Panc1 (cell line): ENCODE measurements at regions of chr2 and their contacts with region 1.

Region 1: GRCh38 chr2:149849136-149849535 is 261.6 kb upstream of the MMADHC start:
- DNase-seq: no peak
- ATAC-seq: no peak
- H3K4me3 ChIP-seq: no peak overlapping the region
- H3K27ac ChIP-seq: no peak overlapping the region
- H3K4me1 ChIP-seq: no peaks in the 10 kb centered on the region
- H3K27me3 ChIP-seq: no peaks in the 10 kb centered on the region
- CTCF ChIP-seq: no peak

Region 2: DNA sequence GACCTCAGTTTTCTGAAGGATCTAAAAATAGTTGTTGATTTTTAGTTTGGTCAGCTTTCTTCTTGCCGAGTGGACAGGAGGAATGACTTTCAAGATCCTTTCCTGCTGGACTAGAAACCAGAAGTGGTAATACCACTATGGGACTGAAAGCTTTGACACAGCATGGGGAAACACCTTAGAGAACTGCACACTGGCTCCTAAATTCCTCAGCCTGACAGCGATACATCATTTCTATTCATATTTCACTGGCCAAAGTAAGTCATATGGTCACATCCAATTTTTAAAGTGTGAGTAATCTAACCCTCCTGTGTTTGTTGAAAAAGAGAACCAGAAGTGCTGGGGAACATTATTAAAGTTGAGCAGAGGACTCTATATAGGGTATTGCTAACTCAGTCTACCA is 16.8 kb before region 1 on chr2:
- CTCF ChIA-PET with region 1: no interaction called
- POLR2A ChIA-PET with region 1: no interaction called
- in situ Hi-C with region 1: no loop called
- intact Hi-C with region 1: loop called (anchors 1 kb)
- DNase-seq: no peak
- ATAC-seq: no peak
- H3K4me3 ChIP-seq: no peak overlapping the region
- H3K27ac ChIP-seq: no peak overlapping the region
- H3K4me1 ChIP-seq: no peaks in the 10 kb centered on the region
- H3K27me3 ChIP-seq: no peaks in the 10 kb centered on the region
- CTCF ChIP-seq: no peak

Region 3: DNA sequence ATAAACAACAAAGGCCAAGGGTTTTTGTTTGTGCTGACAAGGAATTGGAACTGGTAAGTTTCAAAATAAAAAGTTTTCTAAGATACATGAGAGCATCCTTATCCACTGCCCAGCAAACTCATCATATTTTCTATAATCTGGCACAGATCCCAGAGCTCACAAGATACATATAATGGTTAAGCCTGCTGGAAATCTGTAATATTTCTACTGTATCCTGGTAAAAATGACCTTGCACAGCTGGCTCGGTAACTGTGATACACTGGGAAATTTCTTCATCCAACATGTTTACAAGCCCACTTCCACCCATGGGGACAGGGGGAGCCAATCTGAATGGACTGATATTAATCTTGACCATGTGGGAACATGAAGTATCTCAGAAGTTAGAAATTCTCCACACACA is 163.8 kb after region 1 on chr2:
- CTCF ChIA-PET with region 1: no interaction called
- POLR2A ChIA-PET with region 1: no interaction called
- in situ Hi-C with region 1: no loop called
- intact Hi-C with region 1: no loop called
- DNase-seq: no peak
- ATAC-seq: no peak
- H3K4me3 ChIP-seq: no peak overlapping the region
- H3K27ac ChIP-seq: no peak overlapping the region
- H3K4me1 ChIP-seq: no peaks in the 10 kb centered on the region
- H3K27me3 ChIP-seq: no peaks in the 10 kb centered on the region
- CTCF ChIP-seq: no peak